ENCODE measurements at regions of chr19 and their contacts with region 1.

Region 1: DNA sequence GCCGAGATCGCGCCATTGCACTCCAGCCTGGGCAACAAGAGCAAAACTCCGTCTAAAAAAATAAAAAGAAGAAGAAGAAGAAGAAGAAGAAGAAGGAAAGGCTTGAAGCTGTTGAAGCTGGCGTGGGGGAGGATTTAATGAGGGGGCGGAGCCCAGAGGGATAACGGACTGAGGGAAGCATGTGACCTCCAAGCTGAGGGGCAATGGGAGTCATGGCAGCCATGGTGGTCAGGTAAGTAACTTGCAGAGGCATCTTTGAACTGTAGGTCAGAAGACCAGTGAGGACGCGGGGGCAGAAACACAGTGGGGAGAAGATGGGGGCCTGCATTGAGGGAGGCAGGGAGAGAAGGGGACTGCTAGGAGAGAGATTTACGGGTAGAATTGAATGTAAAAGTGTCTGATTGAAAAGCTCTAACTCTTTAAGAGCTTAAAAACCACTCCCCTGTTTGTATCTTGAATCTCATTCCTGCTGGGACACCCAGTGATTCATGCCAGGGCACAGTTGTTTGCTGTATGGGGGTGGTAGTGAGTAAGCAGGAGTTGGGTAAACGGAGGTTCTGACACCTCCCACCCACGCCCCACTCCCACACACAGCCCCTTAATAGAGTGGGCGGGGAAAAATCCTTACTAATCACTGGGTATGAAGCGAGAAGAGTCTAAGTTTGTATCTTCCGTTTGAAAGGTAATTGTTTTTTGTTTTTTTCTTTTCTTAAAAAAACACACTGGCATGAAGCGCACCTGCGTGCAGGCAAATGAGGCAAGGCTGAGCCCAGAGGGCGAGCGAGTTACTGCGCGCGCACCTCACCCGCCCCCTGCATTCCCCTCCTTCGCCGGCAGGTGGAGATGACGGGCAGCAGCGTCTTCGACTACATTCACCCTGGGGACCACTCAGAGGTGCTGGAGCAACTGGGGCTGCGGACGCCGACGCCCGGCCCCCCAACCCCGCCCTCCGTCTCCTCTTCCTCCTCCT is 13.0 kb downstream of the TMEM160 start:
- DNase-seq: peak; percentile 93
- H3K4me3 Mint-ChIP-seq: peak overlapping the region; percentile 86
- H3K27ac Mint-ChIP-seq: peak overlapping the region; percentile 92
- H3K4me1 Mint-ChIP-seq: peaks cover 24% of the 10 kb centered on the region
- H3K27me3 Mint-ChIP-seq: peaks cover 14% of the 10 kb centered on the region

Region 2: GRCh38 chr19:46984077-46985010 is 51.1 kb before region 1 on chr19:
- intact Hi-C with region 1: no loop called
- DNase-seq: no peak
- H3K4me3 Mint-ChIP-seq: no peak overlapping the region
- H3K27ac Mint-ChIP-seq: no peak overlapping the region
- H3K4me1 Mint-ChIP-seq: peaks cover 14% of the 10 kb centered on the region
- H3K27me3 Mint-ChIP-seq: no peaks in the 10 kb centered on the region

Region 3: DNA sequence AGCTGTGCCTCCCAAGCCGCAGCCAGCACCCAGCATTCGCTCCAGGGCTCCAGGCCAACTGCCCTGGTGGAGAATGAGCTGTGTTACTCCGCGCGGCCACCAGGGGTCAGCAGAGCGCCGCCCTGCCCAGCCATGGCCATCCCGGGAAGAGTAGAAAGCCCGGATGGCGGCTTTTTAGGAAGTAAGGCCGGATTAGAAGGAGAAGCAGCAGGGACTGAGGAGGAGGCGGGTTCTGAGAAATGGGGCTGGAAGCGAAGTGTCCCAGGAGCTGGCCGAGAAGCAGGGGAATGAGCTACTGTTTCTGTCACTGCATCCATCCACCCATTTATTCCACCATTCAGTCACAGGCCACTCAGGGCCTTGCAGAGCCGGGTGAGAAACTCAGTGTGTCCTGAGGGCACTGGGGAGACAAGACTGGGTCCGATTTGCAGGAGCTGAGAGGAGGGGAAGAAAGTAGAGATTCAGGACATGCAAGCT is 22.3 kb before region 1 on chr19:
- intact Hi-C with region 1: loop called (anchors 1 kb)
- DNase-seq: peak; percentile 54
- H3K4me3 Mint-ChIP-seq: no peak overlapping the region
- H3K27ac Mint-ChIP-seq: no peak overlapping the region
- H3K4me1 Mint-ChIP-seq: peaks cover 11% of the 10 kb centered on the region
- H3K27me3 Mint-ChIP-seq: peaks cover 23% of the 10 kb centered on the region

Region 4: DNA sequence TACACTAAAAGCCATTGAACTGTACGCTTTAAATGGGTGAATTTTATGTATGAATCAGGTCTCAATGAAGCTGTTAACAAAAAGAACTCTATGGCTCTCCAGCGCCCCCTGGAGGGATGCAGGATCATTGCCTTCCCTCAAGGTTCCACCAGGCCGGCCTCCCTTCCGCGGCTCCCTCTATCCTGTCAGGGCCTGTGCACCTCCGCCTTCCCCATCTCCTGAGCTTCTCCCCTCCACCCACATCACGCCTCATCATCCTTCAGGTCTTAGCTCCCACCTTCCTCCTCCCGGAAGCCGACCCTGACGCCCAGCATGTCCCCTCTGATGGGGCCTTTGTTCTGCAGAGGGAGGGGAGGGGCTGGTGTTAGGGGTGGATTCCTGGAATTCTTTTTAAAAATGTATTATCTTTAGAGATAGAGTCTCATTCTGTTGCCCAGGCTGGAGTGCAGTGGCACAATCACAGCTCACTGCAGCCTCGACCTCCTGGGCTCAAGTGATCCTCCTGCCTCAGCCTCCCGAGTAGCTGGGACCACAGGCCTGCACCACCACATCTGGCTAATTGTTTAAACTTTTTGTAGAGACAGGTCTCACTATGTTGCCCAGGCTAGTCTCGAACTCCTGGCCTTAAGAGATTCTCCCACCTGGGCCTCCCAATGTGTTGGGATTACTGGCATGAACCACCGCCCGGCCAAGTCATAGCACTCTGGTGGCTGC is 356.3 kb after region 1 on chr19:
- intact Hi-C with region 1: no loop called
- DNase-seq: peak; percentile 61
- H3K4me3 Mint-ChIP-seq: no peak overlapping the region
- H3K27ac Mint-ChIP-seq: no peak overlapping the region
- H3K4me1 Mint-ChIP-seq: no peaks in the 10 kb centered on the region
- H3K27me3 Mint-ChIP-seq: peaks cover 7% of the 10 kb centered on the region

Measured in activated T-helper 1 cell treated with anti-CD3 and anti-CD28 coated beads, Interleukin-12 subunit alpha, Interleukin-12 subunit beta, Interleukin-2, Interleukin-4 antibody, amounts not matched to agents 30 ng/mL and 10 ng/mL and 1 ng/mL, durations not matched to agents 14 hours and 24 hours and 36 hours (primary cell).